ENCODE measurements at regions of chr14 and their contacts with region 1.

Region 1: GRCh38 chr14:27205036-27205435 is 607.2 kb upstream of the NOVA1 start:
- DNase-seq: no peak
- ATAC-seq: no peak
- H3K4me3 ChIP-seq: no peak overlapping the region
- H3K27ac ChIP-seq: no peak overlapping the region
- H3K4me1 ChIP-seq: no peaks in the 10 kb centered on the region
- H3K27me3 ChIP-seq: no peaks in the 10 kb centered on the region
- CTCF ChIP-seq: no peak
- EP300 ChIP-seq: no peak
- POLR2A ChIP-seq: no peak
- RAD21 ChIP-seq: no peak

Region 2: GRCh38 chr14:26663506-26663905 is 541.5 kb before region 1 on chr14:
- CTCF ChIA-PET with region 1: no interaction called
- POLR2A ChIA-PET with region 1: no interaction called
- in situ Hi-C with region 1: no loop called
- intact Hi-C with region 1: loop called (anchors 10 kb)
- DNase-seq: no peak
- ATAC-seq: no peak
- H3K4me3 ChIP-seq: no peak overlapping the region; a peak in 1 of 6 replicates
- H3K27ac ChIP-seq: no peak overlapping the region
- H3K4me1 ChIP-seq: no peaks in the 10 kb centered on the region
- H3K27me3 ChIP-seq: no peaks in the 10 kb centered on the region
- CTCF ChIP-seq: no peak
- EP300 ChIP-seq: no peak
- POLR2A ChIP-seq: no peak
- RAD21 ChIP-seq: no peak

Measured in HepG2 (cell line).